ENCODE measurements at regions of chr10 and their contacts with region 1.

Region 1: DNA sequence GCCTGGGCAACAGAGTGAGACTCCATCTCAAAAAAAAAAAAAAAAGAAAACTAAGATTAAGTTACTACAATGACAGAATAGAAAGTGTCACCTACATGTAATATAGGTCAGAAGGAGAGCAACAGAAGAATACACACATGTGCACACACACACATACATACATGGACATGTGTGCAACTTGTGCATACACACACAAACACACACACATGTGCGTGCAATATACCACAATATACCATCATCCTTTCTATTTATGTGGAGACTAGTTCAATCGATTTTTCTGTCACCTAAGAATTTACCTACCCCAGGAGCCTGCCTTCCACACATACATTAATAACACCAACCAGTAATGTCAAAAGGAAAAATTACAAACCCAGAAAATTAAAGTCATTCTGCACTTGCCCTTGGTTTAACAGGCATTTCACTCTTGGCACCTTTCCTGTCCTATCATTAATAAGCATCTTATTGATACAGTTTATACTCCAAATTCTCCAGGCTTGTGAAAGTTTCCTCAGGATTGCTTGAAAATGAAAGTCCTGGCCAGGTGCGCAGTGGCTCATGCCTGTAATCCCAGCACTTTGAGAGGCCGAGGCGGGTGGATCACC is 2.5 kb downstream of the PNLIPRP1 start:
- DNase-seq: no peak
- ATAC-seq: no peak
- H3K4me3 ChIP-seq: no peak overlapping the region
- H3K27ac ChIP-seq: no peak overlapping the region
- H3K4me1 ChIP-seq: no peaks in the 10 kb centered on the region
- H3K27me3 ChIP-seq: peaks cover 8% of the 10 kb centered on the region; the same call in 1 of the 2 replicates
- CTCF ChIP-seq: no peak

Region 2: GRCh38 chr10:115295213-115295805 is 1297.9 kb before region 1 on chr10:
- CTCF ChIA-PET with region 1: no interaction called
- POLR2A ChIA-PET with region 1: interaction called, 10 read pairs
- in situ Hi-C with region 1: no loop called
- intact Hi-C with region 1: no loop called
- DNase-seq: no peak
- ATAC-seq: no peak
- H3K4me3 ChIP-seq: no peak overlapping the region
- H3K27ac ChIP-seq: no peak overlapping the region
- H3K4me1 ChIP-seq: no peaks in the 10 kb centered on the region
- H3K27me3 ChIP-seq: no peaks in the 10 kb centered on the region
- CTCF ChIP-seq: no peak

Region 3: GRCh38 chr10:116765547-116766162 is 172.4 kb after region 1 on chr10:
- CTCF ChIA-PET with region 1: no interaction called
- POLR2A ChIA-PET with region 1: no interaction called
- in situ Hi-C with region 1: no loop called
- intact Hi-C with region 1: no loop called
- DNase-seq: no peak
- ATAC-seq: no peak
- H3K4me3 ChIP-seq: no peak overlapping the region
- H3K27ac ChIP-seq: no peak overlapping the region
- H3K4me1 ChIP-seq: no peaks in the 10 kb centered on the region
- H3K27me3 ChIP-seq: peaks cover 12% of the 10 kb centered on the region
- CTCF ChIP-seq: no peak

Measured in Panc1 (cell line).